Activated T-helper 2 cell treated with anti-CD3 and anti-CD28 coated beads, Interferon-gamma antibody, Interleukin-2, Interleukin-4, amounts not matched to agents 10 μg/mL and 5 μg/mL and 100 μg/mL, durations not matched to agents 14 hours and 24 hours and 36 hours (primary cell): ENCODE measurements at regions of chr9 and their contacts with region 1.

Region 1: DNA sequence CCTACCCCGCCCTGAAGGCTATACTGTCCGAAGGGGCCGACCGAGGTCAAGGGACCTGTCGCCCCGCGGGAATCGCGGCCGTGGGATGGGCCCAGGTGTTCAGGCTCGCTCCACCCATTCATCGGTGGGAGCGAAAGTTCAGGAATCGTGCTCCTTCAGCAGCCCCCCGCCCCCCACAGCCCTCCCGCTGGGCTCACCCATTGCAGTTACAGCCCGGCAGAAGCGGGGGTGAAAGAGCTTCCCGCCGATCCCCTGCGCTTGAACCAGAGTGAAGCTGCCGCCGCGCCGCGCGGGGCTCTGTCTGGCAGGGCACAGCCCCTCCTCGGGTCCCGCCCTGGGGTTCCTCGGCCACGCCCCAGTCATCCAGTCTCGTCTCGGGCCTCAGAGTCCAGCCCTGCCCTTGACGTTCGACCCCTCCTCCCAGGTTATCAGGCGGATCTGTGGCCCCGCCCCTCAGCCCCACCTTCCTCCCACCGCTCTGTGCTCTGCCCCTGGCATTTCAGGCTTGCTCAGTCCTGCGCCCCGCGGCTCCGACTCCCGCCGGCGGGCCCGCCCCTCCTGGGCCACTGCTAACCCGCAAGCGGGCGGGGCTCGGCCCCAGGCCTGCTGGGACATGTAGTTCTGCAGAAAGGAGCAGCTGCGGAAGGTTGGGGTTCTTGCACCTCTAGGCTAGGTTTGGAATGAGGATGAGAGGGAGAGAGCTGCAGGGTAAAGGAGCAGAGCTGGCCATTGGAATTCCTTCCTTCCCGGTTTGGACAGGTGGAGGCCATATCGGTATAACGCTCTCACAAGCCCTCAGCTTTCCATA is at the start of gene MYORG:
- DNase-seq: peak; percentile 97
- H3K4me3 Mint-ChIP-seq: peak within 1 kb of the TSS; percentile 86
- H3K27ac Mint-ChIP-seq: no peak within 1 kb of the TSS
- H3K4me1 Mint-ChIP-seq: peaks cover 21% of the 10 kb centered on the region
- H3K27me3 Mint-ChIP-seq: no peaks in the 10 kb centered on the region
- total RNA-seq, gene MYORG: 1.6 TPM in 2 replicates

Region 2: DNA sequence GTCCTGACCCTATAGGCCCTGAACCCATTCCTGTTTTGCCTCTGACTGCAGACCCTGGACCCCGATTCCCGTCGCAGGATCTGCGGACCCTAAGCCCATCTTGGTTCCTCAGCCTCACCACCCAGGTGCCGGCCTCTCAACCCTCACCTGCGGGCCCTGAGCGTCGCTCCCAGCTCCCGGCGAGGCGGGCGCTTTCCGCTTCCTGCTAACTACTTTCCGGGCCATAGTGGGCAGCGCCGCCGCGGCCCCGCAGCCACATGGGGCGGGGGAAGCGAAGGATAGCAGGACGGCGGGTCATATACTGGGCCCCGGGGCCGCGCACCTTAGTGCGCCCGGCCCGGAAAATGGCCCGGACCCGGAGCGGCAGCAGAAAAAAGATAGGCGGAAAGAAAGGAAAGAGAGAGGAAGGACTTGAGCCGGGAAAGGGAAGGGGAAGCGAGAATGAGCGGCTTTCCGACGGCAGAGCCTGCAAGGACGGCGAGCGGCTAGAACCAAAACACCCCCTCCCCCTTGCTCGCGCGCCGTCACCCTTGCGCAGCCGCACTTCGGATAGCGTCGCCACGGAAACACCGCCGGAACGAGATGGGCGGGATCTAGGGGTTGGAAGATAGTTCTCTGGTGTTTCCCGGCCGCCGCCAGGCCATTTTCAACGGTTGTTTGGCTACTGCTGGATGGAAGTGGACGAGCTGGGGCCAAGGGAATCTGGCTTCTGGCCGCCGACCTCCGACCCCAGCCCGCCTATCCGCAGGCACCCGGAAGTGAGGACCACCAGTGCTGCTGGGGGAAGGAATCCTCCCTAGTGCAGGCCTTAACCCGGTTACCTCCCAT is 250.4 kb before region 1 on chr9 and contains the start of gene DCAF12:
- intact Hi-C with region 1: loop called (anchors 2 kb)
- DNase-seq: peak; percentile 90
- H3K4me3 Mint-ChIP-seq: peak within 1 kb of the TSS; percentile 98
- H3K27ac Mint-ChIP-seq: peak within 1 kb of the TSS; percentile 98
- H3K4me1 Mint-ChIP-seq: peaks cover 37% of the 10 kb centered on the region
- H3K27me3 Mint-ChIP-seq: no peaks in the 10 kb centered on the region
- total RNA-seq, gene DCAF12: 42.8 and 43.5 TPM in 2 replicates

Region 3: GRCh38 chr9:34252670-34253459 is 123.9 kb before region 1 on chr9:
- intact Hi-C with region 1: loop called (anchors 5 kb)
- DNase-seq: peak; percentile 58
- H3K4me3 Mint-ChIP-seq: no peak overlapping the region
- H3K27ac Mint-ChIP-seq: no peak overlapping the region
- H3K4me1 Mint-ChIP-seq: no peaks in the 10 kb centered on the region
- H3K27me3 Mint-ChIP-seq: no peaks in the 10 kb centered on the region

Region 4: DNA sequence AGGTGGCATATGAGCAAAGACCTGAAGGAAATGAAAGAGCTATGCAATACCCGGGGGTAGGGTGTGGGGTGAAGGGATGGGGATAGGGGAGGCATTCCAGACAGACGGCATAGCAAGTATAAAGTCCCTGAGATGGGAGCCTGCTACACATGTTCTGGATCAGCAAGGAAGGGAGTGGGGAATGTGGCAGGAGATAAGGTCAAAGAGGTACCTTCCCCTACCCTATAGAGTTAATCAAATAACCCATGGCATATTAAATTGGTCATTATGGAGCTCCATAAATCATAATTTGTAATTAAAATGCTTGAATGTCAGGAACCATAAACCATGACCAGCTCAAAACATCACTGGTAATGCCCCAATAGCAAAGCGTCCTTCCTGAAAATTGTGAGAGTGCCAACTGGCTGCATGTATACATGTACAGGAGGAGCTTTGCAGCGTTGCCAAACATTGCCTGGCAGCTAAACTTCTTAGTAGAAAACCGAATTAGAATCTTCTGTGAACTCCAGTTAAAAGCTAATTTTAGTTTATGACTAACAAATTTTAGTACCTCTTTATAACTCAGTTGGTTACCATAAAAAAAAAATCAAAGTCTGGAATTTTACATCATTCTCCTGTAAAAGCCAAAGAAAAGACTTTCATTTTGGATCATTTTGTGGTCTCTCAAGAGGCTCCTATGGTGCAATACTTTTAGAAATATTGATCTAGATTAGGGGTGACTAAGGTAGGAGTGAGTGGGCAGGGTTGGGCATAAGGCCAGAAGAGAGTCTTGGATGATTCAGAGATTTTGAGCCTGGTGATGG is 86.5 kb after region 1 on chr9:
- intact Hi-C with region 1: loop called (anchors 1 kb)
- DNase-seq: no peak
- H3K4me3 Mint-ChIP-seq: no peak overlapping the region
- H3K27ac Mint-ChIP-seq: no peak overlapping the region
- H3K4me1 Mint-ChIP-seq: peaks cover 20% of the 10 kb centered on the region
- H3K27me3 Mint-ChIP-seq: peaks cover 23% of the 10 kb centered on the region